Endothelial cell of umbilical vein (primary cell): ENCODE measurements at regions of chr5 and their contacts with region 1.

Region 1: GRCh38 chr5:81301271-81302015 is at the start of gene ZCCHC9:
- DNase-seq: peak; percentile 95
- H3K4me3 ChIP-seq: peak within 1 kb of the TSS; percentile 46 to 76 (median 66)
- H3K27ac ChIP-seq: peak within 1 kb of the TSS; percentile 68
- H3K4me1 ChIP-seq: peaks cover 16% of the 10 kb centered on the region
- H3K27me3 ChIP-seq: no peaks in the 10 kb centered on the region
- CTCF ChIP-seq: peak in 1 of 2 donors; percentile 14
- POLR2A ChIP-seq: peak; percentile 97
- total RNA-seq, gene ZCCHC9: 22.2 and 23.9 TPM in 2 replicates

Region 2: GRCh38 chr5:80686757-80687156 is 614.7 kb before region 1 on chr5:
- CTCF ChIA-PET with region 1: interaction called, 5 read pairs
- POLR2A ChIA-PET with region 1: no interaction called
- dilution Hi-C with region 1: no loop called
- intact Hi-C with region 1: loop called (anchors 5 kb)
- DNase-seq: peak; percentile 27
- H3K4me3 ChIP-seq: no peak overlapping the region
- H3K27ac ChIP-seq: no peak overlapping the region
- H3K4me1 ChIP-seq: no peaks in the 10 kb centered on the region
- H3K27me3 ChIP-seq: no peaks in the 10 kb centered on the region
- CTCF ChIP-seq: peak; percentile 1 to 14
- POLR2A ChIP-seq: no peak

Region 3: DNA sequence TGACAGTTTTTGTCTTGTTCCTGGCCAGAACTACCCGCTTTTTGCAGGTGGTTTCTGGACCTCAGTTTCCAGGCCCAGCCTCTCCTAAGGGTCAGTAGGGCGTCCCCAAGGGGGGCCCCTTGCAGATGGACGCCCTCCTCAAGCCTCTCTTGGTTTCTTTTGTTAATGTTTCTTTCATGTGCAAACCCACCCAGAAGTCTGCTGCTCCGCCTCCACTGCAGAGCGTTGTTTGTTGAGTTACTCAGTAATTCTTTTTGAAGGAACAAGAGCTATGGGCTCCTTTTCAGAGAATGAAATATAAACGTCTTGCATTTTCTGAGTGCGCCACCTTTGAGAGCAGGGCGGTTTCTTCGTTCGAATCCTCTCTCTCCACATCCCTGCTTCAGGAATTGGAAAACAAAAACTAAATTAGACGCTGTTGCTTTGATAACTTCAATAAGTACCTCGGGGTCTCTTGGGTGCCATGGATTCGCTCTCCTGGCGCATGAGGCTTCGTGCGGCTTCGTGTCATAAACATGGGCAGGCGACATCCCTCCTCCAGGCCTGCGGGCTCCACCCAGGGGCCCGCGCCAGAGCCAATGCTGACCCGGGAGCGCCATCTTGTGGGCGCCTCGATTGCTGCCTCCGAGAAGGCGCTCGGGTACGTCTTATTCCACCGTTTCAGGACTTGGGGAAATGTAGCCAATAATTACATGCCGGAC is 106.7 kb before region 1 on chr5:
- CTCF ChIA-PET with region 1: interaction called, 3 read pairs
- POLR2A ChIA-PET with region 1: no interaction called
- dilution Hi-C with region 1: no loop called
- intact Hi-C with region 1: loop called (anchors 1 kb)
- DNase-seq: peak; percentile 77
- H3K4me3 ChIP-seq: no peak overlapping the region
- H3K27ac ChIP-seq: no peak overlapping the region
- H3K4me1 ChIP-seq: no peaks in the 10 kb centered on the region
- H3K27me3 ChIP-seq: peaks cover 5 to 14% of the 10 kb centered on the region in 2 experiments
- CTCF ChIP-seq: peak; percentile 94 to 95
- POLR2A ChIP-seq: no peak

Region 4: DNA sequence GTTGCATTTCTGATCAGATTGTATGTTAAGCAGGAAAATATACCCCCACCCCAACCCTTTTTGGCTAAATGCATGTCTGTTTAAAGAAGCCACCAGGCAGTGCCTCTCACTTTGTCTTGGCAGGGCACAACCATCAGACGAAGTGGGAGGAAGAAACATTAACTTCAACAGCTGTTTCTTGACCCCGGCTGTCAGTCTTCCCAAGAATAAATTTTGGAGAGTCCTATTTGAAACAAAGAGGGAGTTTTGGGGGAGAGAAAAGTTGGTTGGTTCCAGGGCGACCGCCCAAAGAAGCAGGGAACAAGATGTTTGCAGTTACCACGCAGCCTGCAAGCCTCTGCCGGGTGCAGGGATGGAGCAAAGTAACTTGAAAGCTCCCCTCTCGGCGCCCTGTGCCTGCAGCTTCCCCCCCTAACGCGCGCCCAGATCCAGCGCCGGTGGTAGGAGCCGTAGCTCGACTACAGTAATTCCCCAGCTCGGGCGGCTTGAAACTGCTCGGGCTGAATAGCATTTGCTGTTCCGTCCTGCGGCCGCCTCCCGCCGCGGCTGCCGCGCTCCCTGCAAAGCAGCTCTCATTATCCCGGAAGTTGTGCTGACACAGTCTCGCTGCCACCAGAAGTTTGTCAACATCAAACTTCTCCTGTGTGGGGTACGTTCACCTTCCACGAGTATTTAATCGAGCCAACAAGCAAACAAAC is 550.2 kb after region 1 on chr5:
- CTCF ChIA-PET with region 1: no interaction called
- POLR2A ChIA-PET with region 1: no interaction called
- dilution Hi-C with region 1: no loop called
- intact Hi-C with region 1: loop called (anchors 5 kb)
- DNase-seq: peak; percentile 94
- H3K4me3 ChIP-seq: peak overlapping the region in 2 of 3 experiments; percentile 40 to 54
- H3K27ac ChIP-seq: peak overlapping the region; percentile 65
- H3K4me1 ChIP-seq: peaks cover 10% of the 10 kb centered on the region
- H3K27me3 ChIP-seq: no peaks in the 10 kb centered on the region
- CTCF ChIP-seq: no peak
- POLR2A ChIP-seq: peak; percentile 88

Region 5: DNA sequence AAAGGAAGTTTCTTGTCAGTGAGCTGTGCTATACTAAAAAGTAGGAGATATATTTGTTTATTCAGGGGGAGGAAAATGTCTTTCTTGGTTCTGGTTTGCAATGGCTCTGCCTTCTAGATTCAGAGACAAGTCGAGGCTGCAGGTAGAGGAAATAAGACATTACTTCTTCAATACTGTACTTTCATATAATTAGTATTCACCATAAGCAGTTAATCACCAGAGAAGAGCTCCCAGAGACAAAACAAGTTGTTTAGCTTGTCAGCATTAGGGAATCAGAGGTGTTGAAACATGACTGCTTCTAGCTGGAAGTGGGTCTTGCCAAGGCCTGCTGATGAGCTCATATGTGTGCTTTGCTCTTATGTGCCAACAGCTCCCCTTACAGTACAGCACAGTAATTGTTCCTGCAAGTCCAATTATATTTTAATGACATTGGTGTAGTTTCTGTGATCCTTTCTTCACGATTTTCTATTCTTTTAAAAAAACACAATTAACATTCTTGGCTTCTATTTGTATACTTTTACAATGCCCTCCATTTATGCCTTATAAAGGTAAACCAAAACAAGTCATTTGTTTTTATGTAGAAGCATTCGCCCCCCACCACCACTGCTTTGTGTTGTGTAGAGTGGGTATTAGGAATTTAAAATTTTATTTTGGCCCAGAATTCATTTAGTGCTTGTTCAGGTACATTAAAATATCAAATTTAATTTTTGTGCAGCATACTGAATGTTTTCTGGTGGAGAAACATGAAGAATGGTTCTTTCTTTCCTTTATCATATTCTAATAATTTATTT is 864.5 kb after region 1 on chr5:
- CTCF ChIA-PET with region 1: interaction called, 26 read pairs
- POLR2A ChIA-PET with region 1: no interaction called
- dilution Hi-C with region 1: no loop called
- intact Hi-C with region 1: loop called (anchors 1 kb)
- DNase-seq: peak; percentile 86
- H3K4me3 ChIP-seq: no peak overlapping the region
- H3K27ac ChIP-seq: peak overlapping the region; percentile 17
- H3K4me1 ChIP-seq: peaks cover 26% of the 10 kb centered on the region
- H3K27me3 ChIP-seq: no peaks in the 10 kb centered on the region
- CTCF ChIP-seq: peak; percentile 60 to 64
- POLR2A ChIP-seq: no peak

Region 6: GRCh38 chr5:82278095-82278918 is 976.9 kb after region 1 on chr5 and contains the start of gene RPS23:
- CTCF ChIA-PET with region 1: no interaction called
- POLR2A ChIA-PET with region 1: no interaction called
- dilution Hi-C with region 1: no loop called
- intact Hi-C with region 1: loop called (anchors 5 kb)
- DNase-seq: peak; percentile 92
- H3K4me3 ChIP-seq: peak within 1 kb of the TSS; percentile 74 to 99 (median 96)
- H3K27ac ChIP-seq: peak within 1 kb of the TSS; percentile 91
- H3K4me1 ChIP-seq: peaks cover 11% of the 10 kb centered on the region
- H3K27me3 ChIP-seq: no peaks in the 10 kb centered on the region
- CTCF ChIP-seq: no peak
- POLR2A ChIP-seq: peak; percentile 91
- total RNA-seq, gene RPS23: 1,940 and 2,037 TPM in 2 replicates